Calu3 (cell line): ENCODE measurements at regions of chr13 and their contacts with region 1.

Region 1: GRCh38 chr13:103898481-103898880 is 832.3 kb upstream of the SLC10A2 start:
- DNase-seq: no peak
- H3K4me3 Mint-ChIP-seq: no peak overlapping the region
- H3K27ac Mint-ChIP-seq: no peak overlapping the region
- H3K4me1 Mint-ChIP-seq: no peaks in the 10 kb centered on the region
- H3K27me3 Mint-ChIP-seq: no peaks in the 10 kb centered on the region
- CTCF ChIP-seq: no peak

Region 2: GRCh38 chr13:104015646-104016396 is 117.3 kb after region 1 on chr13:
- CTCF ChIA-PET with region 1: no interaction called
- intact Hi-C with region 1: loop called (anchors 5 kb)
- DNase-seq: peak; percentile 19
- H3K4me3 Mint-ChIP-seq: no peak overlapping the region
- H3K27ac Mint-ChIP-seq: peak overlapping the region; percentile 84
- H3K4me1 Mint-ChIP-seq: no peaks in the 10 kb centered on the region
- H3K27me3 Mint-ChIP-seq: no peaks in the 10 kb centered on the region
- CTCF ChIP-seq: no peak